Psoas muscle (tissue), 8 donors: ENCODE measurements at regions of chr11 and their contacts with region 1.

Region 1: GRCh38 chr11:57741132-57742086 is at the start of gene SELENOH:
- DNase-seq: peak; percentile 96 to 98
- ATAC-seq: peak; percentile 97 to 98 (median 98)
- H3K4me3 ChIP-seq: peak within 1 kb of the TSS; percentile 77
- H3K27ac ChIP-seq: peak within 1 kb of the TSS; percentile 92
- H3K4me1 ChIP-seq: peaks cover 22% of the 10 kb centered on the region
- H3K27me3 ChIP-seq: no peaks in the 10 kb centered on the region
- CTCF ChIP-seq: no peak
- total RNA-seq, gene SELENOH: 67.0 to 109 (median 88.0) TPM

Region 2: GRCh38 chr11:57712256-57713150 is 28.9 kb before region 1 on chr11 and contains the start of gene TMX2:
- intact Hi-C with region 1: loop called in 1 of 2 experiments (anchors 1 kb)
- DNase-seq: peak; percentile 91 to 95
- ATAC-seq: peak; percentile 95 to 97 (median 96)
- H3K4me3 ChIP-seq: peak within 1 kb of the TSS; percentile 93
- H3K27ac ChIP-seq: peak within 1 kb of the TSS; percentile 88
- H3K4me1 ChIP-seq: peaks cover 36% of the 10 kb centered on the region
- H3K27me3 ChIP-seq: no peaks in the 10 kb centered on the region
- CTCF ChIP-seq: no peak
- total RNA-seq, gene TMX2: 31.5 to 69.7 (median 51.1) TPM

Region 3: GRCh38 chr11:57761301-57762234 is 20.2 kb after region 1 on chr11 and contains the start of gene CTNND1:
- intact Hi-C with region 1: loop called in 1 of 2 experiments (anchors 2 kb)
- DNase-seq: peak; percentile 80 to 91
- ATAC-seq: peak; percentile 99 to 100 (median 100)
- H3K4me3 ChIP-seq: peak within 1 kb of the TSS; percentile 83
- H3K27ac ChIP-seq: peak within 1 kb of the TSS; percentile 93
- H3K4me1 ChIP-seq: peaks cover 30% of the 10 kb centered on the region
- H3K27me3 ChIP-seq: no peaks in the 10 kb centered on the region
- CTCF ChIP-seq: no peak
- total RNA-seq, gene CTNND1: 26.1 to 35.2 (median 30.1) TPM

Region 4: DNA sequence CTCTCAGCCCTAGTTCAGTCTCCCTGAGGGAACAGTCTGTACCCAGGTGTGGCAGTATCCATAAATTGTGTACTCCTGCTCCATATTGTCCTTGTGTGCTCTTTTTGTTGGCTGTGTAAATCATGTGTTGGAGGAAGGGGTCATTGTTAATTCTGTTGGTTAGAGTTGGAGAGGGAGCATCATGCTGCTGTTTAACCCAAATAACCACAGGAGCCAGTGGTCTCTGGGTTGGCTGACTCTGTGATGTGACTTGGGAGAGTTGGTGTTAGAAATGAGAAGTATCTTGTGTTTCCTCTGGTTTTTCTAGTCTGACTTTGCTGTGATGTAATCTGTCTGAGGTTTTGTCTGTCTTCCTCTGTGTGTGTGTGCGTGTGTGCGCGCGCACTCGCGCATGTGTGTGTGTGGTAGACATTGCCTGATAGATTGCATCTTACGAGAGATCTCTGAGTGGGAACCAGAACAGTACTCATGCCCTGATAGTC is 50.7 kb after region 1 on chr11:
- intact Hi-C with region 1: loop called in 1 of 2 experiments (anchors 10 kb)
- DNase-seq: peak; percentile 64 to 82
- ATAC-seq: peak in 3 of 4 donors; percentile 30 to 69 (median 49)
- H3K4me3 ChIP-seq: peak overlapping the region; percentile 33
- H3K27ac ChIP-seq: peak overlapping the region; percentile 42
- H3K4me1 ChIP-seq: peaks cover 28% of the 10 kb centered on the region
- H3K27me3 ChIP-seq: no peaks in the 10 kb centered on the region
- CTCF ChIP-seq: no peak

Region 5: DNA sequence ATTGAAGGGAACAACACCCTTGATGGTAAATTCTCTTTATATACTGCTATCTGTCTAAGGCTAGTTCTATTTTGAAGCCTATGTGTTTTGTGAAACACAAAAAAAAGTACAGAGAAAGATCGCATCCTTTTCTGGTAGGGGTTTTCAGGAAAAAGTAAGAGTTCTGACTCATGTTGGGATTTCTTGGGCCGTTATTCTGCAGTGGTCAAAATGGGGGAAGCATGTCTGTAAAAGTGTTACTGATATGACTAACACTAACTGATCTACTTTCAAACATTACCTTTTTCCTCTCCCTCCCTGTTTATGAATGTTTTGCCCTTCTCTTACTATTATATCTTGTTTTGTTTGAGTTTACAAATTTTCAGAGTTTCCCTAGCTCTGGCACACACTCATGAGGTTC is 74.1 kb after region 1 on chr11:
- intact Hi-C with region 1: no loop called
- DNase-seq: no peak
- ATAC-seq: no peak
- H3K4me3 ChIP-seq: no peak overlapping the region
- H3K27ac ChIP-seq: no peak overlapping the region
- H3K4me1 ChIP-seq: no peaks in the 10 kb centered on the region
- H3K27me3 ChIP-seq: no peaks in the 10 kb centered on the region
- CTCF ChIP-seq: no peak

Region 6: DNA sequence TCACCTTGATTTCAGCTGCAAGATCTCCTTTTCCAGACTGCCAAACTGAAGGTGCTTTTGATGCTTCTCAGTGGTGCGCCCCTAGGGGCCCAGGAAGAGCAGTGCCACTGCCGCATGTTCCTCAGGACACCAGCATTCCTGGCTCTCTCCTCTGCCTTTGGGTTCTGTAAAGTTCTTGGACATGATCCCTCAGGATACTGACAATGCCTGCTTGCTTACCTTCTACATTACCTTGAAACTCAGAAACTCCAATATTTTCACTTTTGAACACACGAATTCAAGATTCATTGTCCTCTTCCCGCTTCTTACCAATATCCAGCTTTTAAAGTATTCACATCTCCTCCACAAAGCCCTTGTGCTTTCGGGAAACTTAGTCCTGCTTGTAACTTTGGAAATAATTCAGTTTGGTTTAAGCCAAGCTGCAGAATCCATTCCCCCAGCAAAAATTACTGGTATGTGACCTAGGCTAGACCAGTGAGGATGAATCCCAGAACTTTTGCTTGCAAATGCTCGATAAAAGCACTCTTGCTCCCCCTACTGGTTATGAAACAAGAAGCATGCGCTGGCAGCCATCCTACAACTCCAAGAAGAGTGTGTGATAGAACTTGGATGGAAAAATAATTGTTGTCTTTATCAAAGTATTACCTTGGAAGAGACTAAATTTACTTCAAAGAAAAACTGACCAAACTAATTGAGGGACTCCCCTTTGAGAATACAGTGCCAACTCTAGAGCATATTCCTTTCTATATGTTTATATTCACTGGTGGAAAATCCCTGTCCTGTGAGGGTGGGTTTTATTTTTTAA is 783.0 kb after region 1 on chr11:
- intact Hi-C with region 1: loop called in 1 of 2 experiments (anchors 10 kb)
- DNase-seq: peak; percentile 39 to 62
- ATAC-seq: peak; percentile 48 to 85 (median 70)
- H3K4me3 ChIP-seq: no peak overlapping the region
- H3K27ac ChIP-seq: no peak overlapping the region
- H3K4me1 ChIP-seq: no peaks in the 10 kb centered on the region
- H3K27me3 ChIP-seq: no peaks in the 10 kb centered on the region
- CTCF ChIP-seq: peak; percentile 64